MCF 10A (cell line): ENCODE measurements at regions of chr2 and their contacts with region 1.

Region 1: DNA sequence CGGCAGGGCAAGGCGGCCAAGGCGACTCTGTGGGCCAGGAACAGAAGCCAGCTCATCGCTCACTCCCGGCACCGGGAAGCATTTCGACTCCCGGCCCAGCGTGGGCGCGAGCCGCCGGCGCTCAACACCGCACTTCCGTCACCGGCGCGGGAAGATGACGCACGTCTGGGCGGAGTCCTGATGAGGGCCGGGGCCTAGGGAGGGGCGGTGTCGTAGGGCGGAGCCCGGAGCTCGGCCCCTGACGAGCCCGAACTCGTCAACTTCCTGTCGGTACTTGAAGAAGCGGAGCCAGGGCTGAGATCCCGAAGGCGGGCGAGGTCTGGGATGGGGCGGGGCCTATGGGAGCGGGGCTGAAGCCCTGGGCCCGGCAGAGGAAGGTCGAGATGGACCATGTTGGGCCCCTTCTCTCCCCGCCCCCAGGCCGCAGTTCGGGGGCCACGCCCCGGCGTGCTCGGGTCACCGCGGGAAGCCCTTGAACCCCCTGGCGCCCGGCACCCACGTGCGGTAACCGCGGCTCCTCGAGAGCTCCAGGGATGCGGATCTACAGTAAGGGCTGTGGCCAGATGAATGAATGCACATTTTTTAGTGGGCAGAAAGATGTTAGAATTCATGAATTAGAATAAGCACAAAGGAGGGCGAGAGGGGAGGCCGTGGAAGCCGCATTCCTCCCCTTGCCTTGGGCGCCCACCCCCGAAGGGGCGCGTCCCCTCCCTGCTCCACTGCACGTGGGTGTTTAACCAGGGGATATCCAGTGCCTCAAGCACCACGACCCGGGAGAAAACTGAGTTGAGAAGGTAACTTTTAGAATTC is at the start of gene RNASEH1:
- DNase-seq: peak; percentile 98
- H3K4me3 Mint-ChIP-seq: peak within 1 kb of the TSS; percentile 79
- H3K27ac Mint-ChIP-seq: peak within 1 kb of the TSS; percentile 95
- H3K4me1 Mint-ChIP-seq: peaks cover 10% of the 10 kb centered on the region
- H3K27me3 Mint-ChIP-seq: no peaks in the 10 kb centered on the region
- CTCF ChIP-seq: no peak
- total RNA-seq, gene RNASEH1: 43.2 and 48.3 TPM in 2 replicates

Region 2: DNA sequence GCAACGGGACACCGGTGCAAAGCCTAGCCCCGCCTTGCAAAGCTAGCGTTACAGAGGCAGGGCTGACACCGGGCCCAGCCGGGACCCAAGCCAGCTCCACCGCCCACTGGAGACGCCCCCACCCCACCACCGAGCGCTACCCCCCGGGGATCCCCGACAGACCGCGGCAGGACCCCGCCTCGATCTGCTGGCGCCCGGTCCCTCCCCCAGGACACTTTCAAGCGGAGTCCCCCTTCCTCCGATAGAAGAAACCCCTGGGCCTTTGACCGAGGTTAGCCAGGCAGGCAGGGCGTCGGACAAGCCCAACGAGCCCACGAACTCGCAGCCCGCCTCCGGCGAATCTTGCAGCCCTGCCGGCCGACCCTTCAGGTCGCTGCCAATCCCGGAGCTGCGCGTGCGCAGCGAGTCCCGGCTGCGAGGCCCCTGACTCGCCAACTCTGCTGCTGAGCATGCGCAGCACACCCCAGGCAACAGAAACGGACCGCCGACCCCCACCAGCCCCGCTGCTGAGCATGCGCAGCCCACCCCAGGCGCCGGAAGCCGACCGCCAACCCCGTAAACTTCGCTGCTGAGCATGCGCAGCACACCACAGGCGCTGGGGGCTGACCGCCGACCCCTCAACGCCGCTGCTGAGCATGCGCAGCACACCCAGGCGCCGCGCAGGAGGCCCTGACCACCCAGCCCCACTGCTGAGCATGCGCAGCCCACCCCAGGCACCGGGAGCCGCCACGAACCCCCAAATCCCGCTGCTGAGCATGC is 39.7 kb before region 1 on chr2:
- CTCF ChIA-PET with region 1: interaction called, 3 read pairs
- POLR2A ChIA-PET with region 1: interaction called, 26 read pairs
- intact Hi-C with region 1: loop called (anchors 2 kb)
- DNase-seq: peak; percentile 92
- H3K4me3 Mint-ChIP-seq: peak overlapping the region; percentile 78
- H3K27ac Mint-ChIP-seq: peak overlapping the region; percentile 65
- H3K4me1 Mint-ChIP-seq: peaks cover 26% of the 10 kb centered on the region
- H3K27me3 Mint-ChIP-seq: no peaks in the 10 kb centered on the region
- CTCF ChIP-seq: no peak

Region 3: DNA sequence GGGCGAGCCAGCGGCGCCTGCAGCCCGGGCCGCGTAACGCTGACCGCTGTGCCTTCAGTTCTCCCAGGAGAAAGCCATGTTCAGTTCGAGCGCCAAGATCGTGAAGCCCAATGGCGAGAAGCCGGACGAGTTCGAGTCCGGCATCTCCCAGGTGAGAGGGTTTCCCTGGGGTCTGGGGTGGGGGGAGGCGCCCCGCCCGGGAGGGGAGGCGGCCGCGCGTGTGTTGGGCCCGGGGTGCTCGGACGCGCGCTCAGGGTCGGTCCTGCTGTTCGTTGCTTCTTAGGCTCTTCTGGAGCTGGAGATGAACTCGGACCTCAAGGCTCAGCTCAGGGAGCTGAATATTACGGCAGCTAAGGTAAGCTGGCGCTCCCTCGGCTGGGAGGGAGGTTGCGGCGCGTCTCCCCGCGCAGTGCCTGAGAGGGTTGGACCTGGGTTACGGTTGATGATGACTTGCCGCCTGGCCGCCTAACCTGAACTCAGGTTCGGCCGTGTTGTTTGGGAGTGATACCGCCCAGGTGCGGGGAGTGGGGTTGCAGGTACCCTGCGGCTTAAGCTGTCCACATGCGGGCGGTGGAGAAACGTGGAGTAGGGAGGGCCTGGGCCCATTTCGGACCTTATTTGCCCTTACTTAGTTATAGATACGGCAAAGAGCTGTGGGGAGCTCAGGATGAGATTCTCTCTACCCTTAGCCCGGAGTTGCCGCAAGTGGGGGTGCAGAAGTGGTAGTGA is 17.3 kb after region 1 on chr2:
- CTCF ChIA-PET with region 1: interaction called, 7 read pairs
- POLR2A ChIA-PET with region 1: interaction called, 31 read pairs
- intact Hi-C with region 1: loop called (anchors 1 kb)
- DNase-seq: no peak
- H3K4me3 Mint-ChIP-seq: peak overlapping the region; percentile 85
- H3K27ac Mint-ChIP-seq: peak overlapping the region; percentile 91
- H3K4me1 Mint-ChIP-seq: peaks cover 39% of the 10 kb centered on the region
- H3K27me3 Mint-ChIP-seq: no peaks in the 10 kb centered on the region
- CTCF ChIP-seq: no peak

Region 4: DNA sequence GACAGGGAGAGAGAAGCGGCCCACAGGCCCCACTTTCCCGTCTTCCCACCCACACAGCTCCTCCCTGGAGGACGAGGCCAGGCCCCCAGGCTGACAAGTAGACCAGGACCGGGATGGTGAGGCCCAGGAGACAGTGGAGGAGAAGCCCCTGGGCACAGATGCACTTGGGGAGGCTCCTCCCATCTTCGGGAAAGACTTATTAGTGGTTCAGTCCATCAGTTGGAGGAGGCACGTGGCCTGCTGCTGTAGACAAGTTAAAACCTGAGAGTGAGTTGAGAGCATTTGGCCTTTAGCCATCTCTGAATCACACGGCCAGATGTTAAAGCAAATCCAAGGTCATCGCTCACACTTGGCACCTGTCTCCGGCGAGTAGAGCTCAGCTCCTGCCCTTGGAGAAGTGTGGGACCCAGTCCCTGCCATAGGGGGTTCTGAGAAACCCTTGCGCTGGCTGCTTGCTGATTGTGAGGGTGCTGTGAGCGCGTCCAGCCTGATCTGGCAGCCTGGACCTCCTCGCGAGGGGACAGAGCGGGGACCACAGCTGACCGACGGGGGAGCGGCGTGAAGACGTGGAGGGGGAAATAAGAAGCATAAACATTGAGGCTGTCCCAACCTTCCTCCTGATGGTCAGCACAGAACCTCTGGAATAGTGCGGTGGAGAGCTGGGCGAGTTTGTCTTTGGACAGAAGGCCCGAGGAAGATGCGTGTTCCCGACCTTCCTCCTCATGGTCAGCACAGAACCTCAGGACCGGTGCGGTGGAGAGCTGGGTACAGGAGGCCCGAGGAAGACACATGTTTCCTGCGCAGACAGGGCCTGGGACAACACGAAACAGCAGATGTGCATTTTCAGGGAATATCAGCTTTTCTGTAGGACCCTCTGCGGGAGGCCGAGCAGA is 74.9 kb after region 1 on chr2:
- CTCF ChIA-PET with region 1: interaction called, 5 read pairs
- POLR2A ChIA-PET with region 1: interaction called, 18 read pairs
- intact Hi-C with region 1: no loop called
- DNase-seq: peak; percentile 92
- H3K4me3 Mint-ChIP-seq: no peak overlapping the region
- H3K27ac Mint-ChIP-seq: peak overlapping the region; percentile 39
- H3K4me1 Mint-ChIP-seq: peaks cover 14% of the 10 kb centered on the region
- H3K27me3 Mint-ChIP-seq: no peaks in the 10 kb centered on the region
- CTCF ChIP-seq: no peak